Activated T-helper 1 cell treated with anti-CD3 and anti-CD28 coated beads, Interleukin-12 subunit alpha, Interleukin-12 subunit beta, Interleukin-2, Interleukin-4 antibody, amounts not matched to agents 30 ng/mL and 10 ng/mL and 1 ng/mL, durations not matched to agents 14 hours and 24 hours and 36 hours (primary cell): ENCODE measurements at regions of chr3 and their contacts with region 1.

Region 1: GRCh38 chr3:115147329-115148141 is 447 bp upstream of the ZBTB20 start:
- DNase-seq: peak; percentile 96
- H3K4me3 Mint-ChIP-seq: peak overlapping the region; percentile 96
- H3K27ac Mint-ChIP-seq: peak overlapping the region; percentile 98
- H3K4me1 Mint-ChIP-seq: peaks cover 16% of the 10 kb centered on the region
- H3K27me3 Mint-ChIP-seq: no peaks in the 10 kb centered on the region

Region 2: GRCh38 chr3:113531826-113532697 is 1615.5 kb before region 1 on chr3 and contains the start of gene SIDT1:
- intact Hi-C with region 1: loop called (anchors 10 kb)
- DNase-seq: peak; percentile 64
- H3K4me3 Mint-ChIP-seq: peak within 1 kb of the TSS; percentile 100
- H3K27ac Mint-ChIP-seq: peak within 1 kb of the TSS; percentile 99
- H3K4me1 Mint-ChIP-seq: peaks cover 55% of the 10 kb centered on the region
- H3K27me3 Mint-ChIP-seq: peaks cover 10% of the 10 kb centered on the region
- total RNA-seq, gene SIDT1: 11.3 and 12.2 TPM in 2 replicates

Region 3: DNA sequence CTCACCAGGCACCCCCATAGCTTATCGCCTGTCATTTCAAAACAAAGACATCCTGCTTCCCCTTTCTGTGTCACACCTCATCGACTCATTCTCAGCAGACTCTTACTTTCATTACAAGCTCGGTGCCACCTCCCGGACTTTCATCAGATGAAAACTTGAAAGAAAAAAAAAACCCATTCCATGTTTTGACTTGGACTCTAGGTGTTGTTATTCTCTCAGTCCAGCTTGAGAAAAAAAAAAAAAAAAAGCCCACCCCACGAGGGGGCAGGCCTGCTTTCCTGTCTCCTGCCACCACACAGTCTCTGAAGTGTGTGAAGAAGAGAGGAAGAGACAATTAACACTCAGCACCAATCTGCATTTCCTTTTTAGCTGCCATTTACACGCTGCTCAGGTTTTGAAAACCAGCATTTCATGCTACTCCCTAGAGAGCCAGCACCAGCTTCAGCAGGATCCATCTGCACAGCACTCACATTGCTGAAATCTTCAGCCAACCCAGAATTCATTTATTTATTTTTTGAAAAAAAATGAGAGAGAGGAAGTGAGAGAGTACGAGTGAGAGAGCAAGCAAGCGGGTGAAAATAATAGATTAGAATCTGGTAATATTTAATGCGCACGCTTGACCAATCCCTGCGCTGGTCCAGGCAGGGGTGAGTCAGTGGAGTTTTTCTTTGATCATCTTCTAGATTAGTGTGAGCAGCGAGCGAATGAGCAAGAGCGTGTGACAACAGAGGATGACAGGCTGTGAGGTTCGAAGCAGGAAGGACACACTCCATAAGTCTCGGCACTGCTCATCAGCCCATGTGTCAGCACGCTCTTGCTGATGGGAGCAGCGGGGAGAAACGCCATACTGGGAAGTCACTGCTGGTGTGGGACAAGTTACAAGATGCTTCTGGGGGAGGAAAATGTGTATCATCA is 933.7 kb before region 1 on chr3:
- intact Hi-C with region 1: loop called (anchors 2 kb)
- DNase-seq: peak; percentile 57
- H3K4me3 Mint-ChIP-seq: no peak overlapping the region
- H3K27ac Mint-ChIP-seq: no peak overlapping the region
- H3K4me1 Mint-ChIP-seq: no peaks in the 10 kb centered on the region
- H3K27me3 Mint-ChIP-seq: no peaks in the 10 kb centered on the region

Region 4: DNA sequence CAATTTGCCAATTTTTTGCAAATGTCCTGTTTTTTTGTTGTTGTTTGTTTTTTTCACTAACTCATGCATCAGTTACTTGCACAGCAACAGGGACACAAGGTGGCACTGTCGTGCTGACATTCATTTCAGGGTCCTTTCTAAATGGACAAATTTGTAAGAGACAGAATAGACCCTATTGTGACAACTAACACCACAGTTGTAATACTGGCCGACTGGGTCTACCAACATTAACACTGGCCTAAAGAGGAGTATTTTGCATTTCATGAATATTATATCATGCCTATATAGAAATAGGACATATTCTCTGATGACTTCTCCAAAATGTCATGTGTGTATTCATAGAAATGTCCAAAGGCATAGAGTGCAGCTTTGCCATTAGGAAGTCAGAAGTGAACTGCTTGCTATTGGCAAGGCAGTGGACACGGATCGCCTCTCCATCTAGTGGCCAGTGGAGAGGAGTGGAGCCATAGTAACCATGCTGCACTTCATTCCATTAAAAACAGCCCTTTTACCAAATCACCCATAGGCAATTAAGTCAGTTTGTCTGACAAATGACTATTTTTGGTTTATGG is 55.2 kb before region 1 on chr3:
- intact Hi-C with region 1: loop called (anchors 2 kb)
- DNase-seq: peak; percentile 12
- H3K4me3 Mint-ChIP-seq: no peak overlapping the region
- H3K27ac Mint-ChIP-seq: no peak overlapping the region
- H3K4me1 Mint-ChIP-seq: no peaks in the 10 kb centered on the region
- H3K27me3 Mint-ChIP-seq: no peaks in the 10 kb centered on the region

Region 5: GRCh38 chr3:115120597-115120996 is 26.9 kb before region 1 on chr3:
- intact Hi-C with region 1: no loop called
- DNase-seq: no peak
- H3K4me3 Mint-ChIP-seq: no peak overlapping the region
- H3K27ac Mint-ChIP-seq: no peak overlapping the region
- H3K4me1 Mint-ChIP-seq: no peaks in the 10 kb centered on the region
- H3K27me3 Mint-ChIP-seq: no peaks in the 10 kb centered on the region

Region 6: DNA sequence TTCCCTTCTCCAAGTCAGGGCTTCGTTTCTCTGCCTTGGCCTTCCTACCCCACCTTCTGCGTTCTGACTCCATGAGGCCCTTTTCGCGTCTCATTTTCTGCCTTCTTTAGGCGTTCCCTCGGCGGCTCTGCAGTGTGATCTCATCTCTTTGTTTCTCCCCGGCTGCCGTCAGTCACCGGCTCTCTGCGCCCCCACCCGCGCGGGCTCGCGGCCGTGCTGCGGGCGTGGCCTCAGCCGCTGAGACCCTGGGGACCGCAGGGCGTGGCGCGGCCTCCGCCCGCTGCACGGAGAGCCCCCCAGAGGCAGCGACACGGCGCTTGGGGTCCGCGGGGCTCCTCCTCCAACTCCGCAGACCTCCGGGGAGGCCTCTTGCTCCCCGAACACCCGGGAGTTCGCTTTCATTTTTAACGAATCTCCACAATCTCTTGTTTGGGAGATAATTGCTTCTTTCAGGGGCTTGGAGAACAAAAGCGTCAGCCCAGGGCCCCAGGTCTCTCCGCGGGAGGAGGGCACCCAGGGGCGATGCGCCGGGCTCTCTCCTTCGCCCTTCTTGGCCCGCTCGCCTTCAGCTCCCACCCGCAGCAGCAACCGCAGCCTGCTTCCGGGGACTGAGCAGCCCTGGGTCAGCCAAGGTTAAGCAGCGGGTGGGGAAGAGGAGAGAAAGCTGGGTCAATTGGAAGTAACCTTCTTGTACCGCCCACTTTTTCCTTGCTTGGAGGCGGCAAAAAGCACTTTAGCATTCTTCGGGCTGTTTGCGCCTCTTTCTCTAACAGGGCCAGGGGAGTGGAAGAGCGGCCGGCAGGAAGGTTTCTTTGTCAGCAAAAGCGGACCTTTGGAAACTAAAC is 511.0 kb after region 1 on chr3:
- intact Hi-C with region 1: loop called (anchors 2 kb)
- DNase-seq: peak; percentile 69
- H3K4me3 Mint-ChIP-seq: peak overlapping the region; percentile 86
- H3K27ac Mint-ChIP-seq: peak overlapping the region; percentile 90
- H3K4me1 Mint-ChIP-seq: peaks cover 32% of the 10 kb centered on the region
- H3K27me3 Mint-ChIP-seq: peaks cover 9% of the 10 kb centered on the region